Motor neuron (in vitro differentiated cells): ENCODE measurements at regions of chr7 and their contacts with region 1.

Region 1: GRCh38 chr7:17301471-17302456 is 3.3 kb downstream of the AHR start:
- ATAC-seq: no peak
- H3K4me3 ChIP-seq: no peak overlapping the region
- H3K27ac ChIP-seq: no peak overlapping the region
- H3K4me1 ChIP-seq: peaks cover 0 to 7% of the 10 kb centered on the region in 2 donors

Region 2: DNA sequence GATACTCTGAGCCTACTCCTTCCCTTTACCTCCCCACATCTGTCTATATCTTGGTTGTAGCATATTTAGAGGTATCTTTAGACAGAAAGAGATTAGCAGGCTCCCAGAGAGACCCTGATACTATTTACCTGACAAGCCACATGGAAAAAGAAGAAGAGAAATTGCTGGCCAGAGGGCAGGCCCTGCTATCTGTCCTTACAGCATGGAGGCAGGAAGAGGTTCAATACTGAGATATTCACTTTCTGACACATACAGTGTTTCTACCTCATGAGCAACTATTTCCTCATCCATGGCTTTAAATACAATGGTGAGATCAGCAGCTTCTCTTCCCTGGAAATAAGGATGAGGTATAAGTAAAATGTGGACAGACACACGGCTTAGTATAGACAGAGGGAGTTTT is 582.1 kb before region 1 on chr7:
- in situ Hi-C with region 1: no loop called
- ATAC-seq: peak in 5 of 8 experiments; percentile 67 to 87 (median 78)
- H3K4me3 ChIP-seq: peak overlapping the region in 1 of 5 donors; percentile 3
- H3K27ac ChIP-seq: no peak overlapping the region
- H3K4me1 ChIP-seq: peaks cover 5 to 15% of the 10 kb centered on the region in 2 donors

Region 3: GRCh38 chr7:16982640-16983350 is 319.0 kb before region 1 on chr7:
- in situ Hi-C with region 1: loop called in 4 of 9 experiments (anchors 10 to 25 kb)
- ATAC-seq: peak in 1 of 8 experiments; percentile 42
- H3K4me3 ChIP-seq: no peak overlapping the region
- H3K27ac ChIP-seq: no peak overlapping the region
- H3K4me1 ChIP-seq: peaks cover 0 to 4% of the 10 kb centered on the region in 2 donors

Region 4: GRCh38 chr7:17063045-17063383 is 238.8 kb before region 1 on chr7:
- in situ Hi-C with region 1: no loop called
- ATAC-seq: no peak
- H3K4me3 ChIP-seq: no peak overlapping the region
- H3K27ac ChIP-seq: no peak overlapping the region
- H3K4me1 ChIP-seq: no peaks in the 10 kb centered on the region

Region 5: GRCh38 chr7:17524746-17525145 is 223.0 kb after region 1 on chr7:
- in situ Hi-C with region 1: loop called in 1 of 9 experiments (anchors 5 kb)
- ATAC-seq: no peak
- H3K4me3 ChIP-seq: no peak overlapping the region
- H3K27ac ChIP-seq: no peak overlapping the region
- H3K4me1 ChIP-seq: no peaks in the 10 kb centered on the region

Region 6: GRCh38 chr7:17640730-17641377 is 339.1 kb after region 1 on chr7:
- in situ Hi-C with region 1: loop called in 2 of 9 experiments (anchors 10 to 25 kb)
- ATAC-seq: no peak
- H3K4me3 ChIP-seq: no peak overlapping the region
- H3K27ac ChIP-seq: no peak overlapping the region
- H3K4me1 ChIP-seq: peaks cover 0 to 5% of the 10 kb centered on the region in 2 donors

Region 7: DNA sequence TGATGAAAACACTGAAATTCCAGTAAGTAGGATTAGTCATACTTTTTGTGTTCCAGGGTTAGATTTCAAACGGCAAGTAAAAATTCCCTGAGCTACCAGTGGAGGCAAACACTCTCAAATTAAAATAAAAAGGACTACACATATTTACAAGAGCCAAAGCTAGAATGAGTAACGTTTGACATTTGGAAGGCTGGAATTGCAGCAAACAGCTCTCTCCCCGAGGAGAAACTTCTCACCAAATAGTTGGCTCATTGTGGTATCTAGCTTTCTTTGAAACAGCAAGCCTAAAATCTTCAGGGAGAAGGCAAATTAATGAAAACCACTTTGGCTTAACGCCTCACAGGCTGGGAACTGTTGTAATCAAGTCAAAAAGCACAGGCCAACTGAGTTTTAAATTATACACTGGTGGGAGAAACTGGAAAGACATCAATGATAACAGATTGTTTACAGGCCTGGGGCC is 350.2 kb after region 1 on chr7:
- in situ Hi-C with region 1: loop called in 3 of 9 experiments (anchors 10 to 25 kb)
- ATAC-seq: peak in 3 of 8 experiments; percentile 34 to 87 (median 85)
- H3K4me3 ChIP-seq: no peak overlapping the region
- H3K27ac ChIP-seq: no peak overlapping the region
- H3K4me1 ChIP-seq: no peaks in the 10 kb centered on the region